CD8-positive, alpha-beta T cell (primary cell): ENCODE measurements at regions of chr11 and their contacts with region 1.

Region 1: DNA sequence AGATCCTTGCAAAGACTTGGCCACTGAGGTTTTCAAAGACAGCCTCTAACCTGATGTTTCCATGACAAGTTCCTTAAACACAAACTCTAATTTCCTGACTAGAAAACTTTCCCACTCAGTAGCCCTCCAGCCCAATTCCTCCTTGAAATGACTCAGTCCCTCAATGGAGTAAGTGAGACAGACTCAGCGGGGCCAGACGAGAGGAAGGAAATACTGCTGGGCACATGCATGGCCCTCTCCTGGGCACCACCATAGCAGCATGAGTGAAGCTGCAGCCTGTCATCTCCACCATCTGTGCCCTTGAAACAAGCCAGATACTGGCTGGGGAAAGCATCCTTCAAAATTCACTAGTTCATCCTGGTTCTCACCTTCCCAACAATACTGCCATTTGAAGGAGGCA is 76.2 kb upstream of the GDPD4 start:
- DNase-seq: no peak
- ATAC-seq: no peak
- H3K4me3 ChIP-seq: no peak overlapping the region
- H3K4me3 Mint-ChIP-seq: no peak overlapping the region
- H3K27ac ChIP-seq: no peak overlapping the region
- H3K27ac Mint-ChIP-seq: no peak overlapping the region
- H3K4me1 ChIP-seq: no peaks in the 10 kb centered on the region
- H3K4me1 Mint-ChIP-seq: peaks cover 2% of the 10 kb centered on the region
- H3K27me3 ChIP-seq: no peaks in the 10 kb centered on the region
- H3K27me3 Mint-ChIP-seq: no peaks in the 10 kb centered on the region
- CTCF ChIP-seq: no peak

Region 2: GRCh38 chr11:77332259-77332658 is 45.5 kb before region 1 on chr11:
- CTCF ChIA-PET with region 1: no interaction called
- POLR2A ChIA-PET with region 1: no interaction called
- intact Hi-C with region 1: no loop called
- DNase-seq: no peak
- ATAC-seq: no peak
- H3K4me3 ChIP-seq: no peak overlapping the region
- H3K4me3 Mint-ChIP-seq: no peak overlapping the region
- H3K27ac ChIP-seq: no peak overlapping the region
- H3K27ac Mint-ChIP-seq: no peak overlapping the region
- H3K4me1 ChIP-seq: no peaks in the 10 kb centered on the region
- H3K4me1 Mint-ChIP-seq: no peaks in the 10 kb centered on the region
- H3K27me3 ChIP-seq: no peaks in the 10 kb centered on the region
- H3K27me3 Mint-ChIP-seq: no peaks in the 10 kb centered on the region
- CTCF ChIP-seq: no peak

Region 3: DNA sequence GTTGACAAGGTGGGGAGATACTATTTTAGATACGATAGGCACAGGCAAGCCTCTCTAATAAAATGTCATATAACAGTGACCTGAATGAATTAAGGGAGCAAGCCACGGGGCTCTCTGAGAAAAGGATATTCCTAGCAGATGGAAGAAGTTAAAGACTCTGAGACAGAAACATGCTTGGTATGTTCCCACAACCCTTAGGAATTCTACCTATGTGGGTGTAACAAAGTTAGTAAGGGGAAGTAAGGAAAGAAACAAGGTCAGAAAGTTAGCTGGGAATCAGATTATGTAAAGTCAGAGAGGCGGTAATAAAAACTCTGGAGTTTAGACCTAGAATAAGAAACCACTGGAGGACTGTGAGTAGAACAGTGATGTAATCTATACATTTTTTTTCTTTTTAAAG is 16.6 kb before region 1 on chr11:
- CTCF ChIA-PET with region 1: no interaction called
- POLR2A ChIA-PET with region 1: no interaction called
- intact Hi-C with region 1: loop called in 1 of 2 experiments (anchors 1 kb)
- DNase-seq: no peak
- ATAC-seq: no peak
- H3K4me3 ChIP-seq: no peak overlapping the region
- H3K4me3 Mint-ChIP-seq: no peak overlapping the region
- H3K27ac ChIP-seq: no peak overlapping the region
- H3K27ac Mint-ChIP-seq: no peak overlapping the region
- H3K4me1 ChIP-seq: no peaks in the 10 kb centered on the region
- H3K4me1 Mint-ChIP-seq: no peaks in the 10 kb centered on the region
- H3K27me3 ChIP-seq: no peaks in the 10 kb centered on the region
- H3K27me3 Mint-ChIP-seq: no peaks in the 10 kb centered on the region
- CTCF ChIP-seq: no peak

Region 4: DNA sequence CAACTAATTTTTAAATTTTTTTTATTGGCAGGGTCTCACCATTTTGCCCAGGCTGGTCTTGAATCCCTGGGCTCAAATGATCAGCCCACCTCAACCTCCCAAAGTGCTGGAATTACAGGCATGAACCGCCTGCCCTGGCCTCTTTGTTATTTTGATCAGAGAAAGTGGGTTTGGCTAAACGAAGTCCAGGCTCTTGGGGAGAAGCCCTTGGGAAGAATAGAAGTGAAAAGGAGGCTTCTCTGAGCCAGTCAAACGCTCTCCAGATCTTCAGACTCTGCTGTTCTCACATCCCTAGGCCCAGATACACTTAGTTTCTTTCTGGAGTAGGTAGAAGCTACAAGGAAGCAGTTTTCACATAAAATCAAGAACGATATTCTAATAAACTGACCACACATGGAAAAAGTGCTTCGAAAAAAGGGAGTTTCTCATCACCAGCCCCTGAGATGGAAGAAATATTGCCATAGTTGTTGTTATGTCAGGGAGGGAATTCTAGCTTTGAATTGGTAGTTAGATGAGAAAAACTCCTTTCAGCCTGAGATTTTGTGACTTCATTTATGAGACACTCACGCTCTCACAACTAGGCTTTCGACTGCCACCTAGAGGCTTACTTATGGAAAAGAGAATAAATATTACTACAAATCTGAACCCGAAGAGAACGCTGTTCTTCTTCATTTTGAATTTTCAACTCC is 170.3 kb after region 1 on chr11:
- CTCF ChIA-PET with region 1: no interaction called
- POLR2A ChIA-PET with region 1: no interaction called
- intact Hi-C with region 1: loop called (anchors 5 to 10 kb)
- DNase-seq: peak in 6 of 9 experiments; percentile 4 to 74 (median 34)
- ATAC-seq: no peak
- H3K4me3 ChIP-seq: no peak overlapping the region
- H3K4me3 Mint-ChIP-seq: no peak overlapping the region
- H3K27ac ChIP-seq: no peak overlapping the region
- H3K27ac Mint-ChIP-seq: no peak overlapping the region
- H3K4me1 ChIP-seq: no peaks in the 10 kb centered on the region
- H3K4me1 Mint-ChIP-seq: peaks cover 6% of the 10 kb centered on the region
- H3K27me3 ChIP-seq: no peaks in the 10 kb centered on the region
- H3K27me3 Mint-ChIP-seq: no peaks in the 10 kb centered on the region
- CTCF ChIP-seq: peak; percentile 66